GM13976 (cell line): ENCODE measurements at regions of chr14 and their contacts with region 1.

Region 1: DNA sequence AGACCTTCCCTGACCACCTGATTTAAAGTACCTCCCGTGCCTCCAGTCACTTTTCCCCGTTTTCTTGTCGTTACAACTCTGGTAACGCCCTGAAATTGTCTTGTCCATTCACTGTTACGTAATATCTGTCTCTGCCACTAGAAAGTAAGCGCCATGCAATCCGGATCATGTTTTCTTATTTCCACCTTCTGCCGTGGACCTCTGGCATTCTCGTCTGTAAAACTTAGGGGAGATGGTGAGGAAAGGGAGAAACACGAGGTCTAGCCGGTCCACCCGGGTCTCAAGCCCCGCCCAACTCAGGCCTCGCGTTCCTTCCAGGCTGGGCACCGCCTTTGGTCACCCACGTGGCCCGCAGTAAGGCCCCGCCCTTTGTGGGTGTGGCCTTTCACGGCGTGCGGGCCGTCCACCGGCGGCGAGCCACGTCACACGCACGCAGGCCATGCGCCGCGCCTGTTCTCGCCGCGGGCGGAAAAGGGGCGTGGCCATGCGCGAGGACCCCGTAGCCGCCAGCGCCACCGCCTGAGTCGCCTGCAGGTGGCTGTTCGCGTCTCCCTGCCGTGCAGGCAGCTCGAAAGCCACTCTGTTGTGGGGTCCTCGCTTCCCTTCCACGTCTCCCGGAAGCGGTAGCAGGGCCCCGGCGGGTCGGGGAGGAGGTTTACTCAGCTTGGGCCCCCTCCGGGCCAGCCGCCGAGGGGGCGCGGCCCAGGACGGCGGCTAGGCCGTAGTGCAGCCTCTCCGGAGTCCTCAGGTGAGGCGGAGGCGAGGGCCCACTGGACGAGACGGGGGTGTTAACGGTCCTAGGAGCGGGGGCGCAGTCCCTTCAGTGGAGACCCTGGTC is at the start of gene GOLGA5:
- DNase-seq: peak; percentile 96
- CTCF ChIP-seq: no peak

Region 2: DNA sequence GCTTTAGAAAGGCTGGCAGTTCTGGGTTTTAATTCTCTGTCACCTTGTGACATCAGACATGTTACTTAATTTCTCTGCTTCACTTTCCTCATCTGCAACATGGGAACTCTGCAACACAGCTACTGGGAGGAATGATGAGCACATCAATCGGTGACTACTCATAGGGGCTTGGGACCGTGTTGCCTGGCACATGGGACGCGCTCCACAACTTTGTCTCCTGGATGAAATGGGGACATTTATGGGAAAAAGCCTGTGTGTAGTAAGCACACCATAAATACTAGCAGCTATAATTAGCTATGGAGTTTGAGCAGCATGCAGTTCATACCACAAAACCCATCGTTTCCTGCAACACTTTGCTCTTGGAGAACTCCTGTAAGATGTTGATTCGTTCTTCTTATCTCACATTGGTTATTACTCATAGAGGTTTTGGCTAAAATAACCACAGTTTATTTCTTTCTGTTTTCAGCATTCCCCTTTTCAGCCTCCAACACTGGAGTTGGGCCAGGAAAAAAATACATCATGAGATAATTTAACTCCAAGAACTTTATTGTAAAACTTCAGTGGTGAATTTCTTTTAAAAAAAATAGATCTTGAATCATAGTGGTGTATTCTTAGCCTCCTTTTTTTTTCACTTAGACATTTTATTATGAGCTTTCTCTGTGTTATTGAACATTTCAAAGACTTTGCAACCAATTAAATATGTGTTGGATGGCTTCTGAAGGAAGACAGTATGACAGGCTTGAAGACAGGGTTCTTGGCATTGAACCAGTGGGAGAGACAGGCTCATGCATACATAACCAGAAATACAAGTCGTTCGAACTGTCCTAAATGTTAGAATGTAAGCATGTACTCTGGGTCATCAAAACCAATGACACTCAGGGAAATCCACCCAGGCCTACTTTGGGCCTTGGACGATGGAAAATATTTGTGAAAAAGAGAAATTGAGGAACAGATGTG is 207.7 kb before region 1 on chr14:
- in situ Hi-C with region 1: loop called (anchors 25 kb)
- DNase-seq: no peak
- CTCF ChIP-seq: no peak

Region 3: GRCh38 chr14:92951912-92952471 is 158.1 kb after region 1 on chr14:
- in situ Hi-C with region 1: no loop called
- DNase-seq: peak; percentile 96
- CTCF ChIP-seq: peak; percentile 97